Naive thymus-derived CD8-positive, alpha-beta T cell (primary cell): ENCODE measurements at regions of chr20 and their contacts with region 1.

Region 1: GRCh38 chr20:2651772-2652723 is at the start of gene NOP56:
- DNase-seq: peak; percentile 90 to 99 (median 95)
- ATAC-seq: peak; percentile 84 to 87
- H3K4me3 Mint-ChIP-seq: peak within 1 kb of the TSS; percentile 84 to 94 (median 89)
- H3K27ac Mint-ChIP-seq: peak within 1 kb of the TSS; percentile 81 to 95 (median 91)
- H3K4me1 Mint-ChIP-seq: peaks cover 7 to 45% (median 36%) of the 10 kb centered on the region in 4 donors
- H3K27me3 Mint-ChIP-seq: no peaks in the 10 kb centered on the region
- polyA plus RNA-seq, gene NOP56: 72.3 to 115 (median 107) TPM

Region 2: DNA sequence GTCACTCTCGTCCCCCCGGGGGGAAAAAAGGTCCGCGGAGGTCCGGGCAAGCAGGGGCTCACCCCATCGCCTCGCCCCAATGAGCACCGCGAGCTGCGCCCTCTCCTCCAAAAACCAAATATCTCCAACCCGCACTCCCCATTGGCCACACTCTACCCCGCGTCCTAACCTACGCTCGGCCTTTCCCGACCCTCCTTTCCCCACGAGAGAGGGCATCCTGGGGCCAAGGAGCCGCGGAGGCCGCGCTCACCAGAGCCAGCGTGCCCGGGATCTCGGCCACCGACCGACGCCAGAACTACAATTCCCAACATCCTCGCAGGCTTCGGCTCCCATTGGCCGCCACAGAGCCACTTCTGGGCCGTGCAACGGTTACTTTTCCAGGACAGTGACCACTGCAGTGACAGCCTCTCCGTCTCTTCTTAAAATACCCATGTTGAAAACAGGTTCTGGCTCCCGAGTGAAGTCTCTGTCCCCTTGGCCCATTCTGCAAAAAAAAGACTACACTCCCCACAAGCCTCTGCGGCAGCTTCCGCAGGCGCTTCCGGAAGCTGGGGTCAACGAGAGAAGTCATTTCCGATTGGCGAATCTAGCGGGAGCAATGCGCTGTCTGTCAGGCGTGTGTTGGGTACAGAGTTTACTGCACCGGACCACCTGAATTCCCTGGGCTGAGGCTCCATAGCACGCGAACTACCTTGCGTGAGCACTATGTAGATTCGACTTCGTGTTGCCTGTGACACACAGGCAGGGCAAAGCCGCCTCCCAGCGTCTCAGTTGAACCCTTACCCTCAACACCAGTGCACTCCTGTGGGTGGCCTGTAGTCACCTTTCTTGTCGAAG is 143.2 kb before region 1 on chr20 and contains the start of gene ZNF343:
- POLR2A ChIA-PET with region 1: interaction called, 11 read pairs
- DNase-seq: peak; percentile 59 to 91 (median 74)
- ATAC-seq: peak; percentile 93
- H3K4me3 Mint-ChIP-seq: peak within 1 kb of the TSS; percentile 95 to 100 (median 100)
- H3K27ac Mint-ChIP-seq: peak within 1 kb of the TSS; percentile 90 to 99 (median 97)
- H3K4me1 Mint-ChIP-seq: peaks cover 12 to 29% (median 20%) of the 10 kb centered on the region in 4 donors
- H3K27me3 Mint-ChIP-seq: peaks cover 0 to 21% (median 6%) of the 10 kb centered on the region in 5 donors
- polyA plus RNA-seq, gene ZNF343: 1.7 to 5.0 (median 3.2) TPM

Region 3: DNA sequence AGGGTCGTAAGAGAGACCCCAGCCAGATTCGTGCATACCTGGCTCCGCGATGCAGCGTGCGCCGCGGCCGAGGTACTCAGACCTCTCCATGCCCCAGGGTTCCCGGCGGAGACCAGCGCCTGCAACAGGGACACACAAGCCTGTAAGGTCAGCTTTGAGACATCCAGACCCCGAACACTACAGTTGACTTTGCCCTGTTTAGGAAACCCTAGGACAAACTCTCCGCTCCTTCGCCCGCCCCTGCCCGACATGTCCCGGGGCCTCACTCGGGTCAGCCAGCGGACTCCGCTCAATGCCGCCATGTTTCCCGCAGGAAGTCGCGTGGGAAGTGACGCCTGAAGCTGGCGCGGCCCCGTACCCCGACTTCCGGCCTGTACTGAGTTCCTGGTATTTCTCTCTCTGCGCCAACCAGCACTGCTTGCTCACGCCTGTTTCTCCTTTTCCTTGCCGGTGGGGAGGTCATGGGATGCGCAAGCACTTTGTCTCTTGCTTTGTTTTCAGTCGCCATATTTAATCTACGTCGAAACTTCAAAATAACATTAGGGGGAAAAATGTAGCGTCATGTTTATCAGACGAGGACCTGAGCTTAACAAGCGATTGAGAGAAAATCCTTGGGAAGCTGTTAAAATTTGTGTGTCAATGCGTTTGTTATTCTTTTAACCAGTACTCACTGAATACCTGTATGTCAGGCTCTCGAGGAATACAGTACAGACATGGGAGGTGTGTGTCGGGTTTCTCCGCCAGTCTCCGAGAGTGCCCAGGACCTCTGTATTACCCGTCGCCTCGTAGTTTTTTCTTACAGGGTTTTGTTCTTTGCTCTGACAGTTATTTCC is 12.1 kb after region 1 on chr20 and contains the start of gene IDH3B:
- POLR2A ChIA-PET with region 1: interaction called, 150 read pairs
- DNase-seq: peak; percentile 80 to 94 (median 91)
- ATAC-seq: peak; percentile 98 to 99
- H3K4me3 Mint-ChIP-seq: peak within 1 kb of the TSS; percentile 89 to 99 (median 92)
- H3K27ac Mint-ChIP-seq: peak within 1 kb of the TSS; percentile 92 to 100 (median 96)
- H3K4me1 Mint-ChIP-seq: peaks cover 12 to 37% (median 26%) of the 10 kb centered on the region in 4 donors
- H3K27me3 Mint-ChIP-seq: peaks cover 0 to 7% (median 0%) of the 10 kb centered on the region in 5 donors
- polyA plus RNA-seq, gene IDH3B: 95.6 to 126 (median 115) TPM

Region 4: GRCh38 chr20:2688041-2688591 is 36.1 kb after region 1 on chr20:
- POLR2A ChIA-PET with region 1: interaction called, 11 read pairs
- DNase-seq: peak; percentile 70 to 89 (median 78)
- ATAC-seq: peak; percentile 78 to 91
- H3K4me3 Mint-ChIP-seq: peak overlapping the region in 9 of 10 donors; percentile 43 to 71 (median 56)
- H3K27ac Mint-ChIP-seq: peak overlapping the region; percentile 9 to 82 (median 54)
- H3K4me1 Mint-ChIP-seq: peaks cover 21 to 33% (median 28%) of the 10 kb centered on the region in 4 donors
- H3K27me3 Mint-ChIP-seq: peaks cover 2 to 25% (median 5%) of the 10 kb centered on the region in 5 donors

Region 5: DNA sequence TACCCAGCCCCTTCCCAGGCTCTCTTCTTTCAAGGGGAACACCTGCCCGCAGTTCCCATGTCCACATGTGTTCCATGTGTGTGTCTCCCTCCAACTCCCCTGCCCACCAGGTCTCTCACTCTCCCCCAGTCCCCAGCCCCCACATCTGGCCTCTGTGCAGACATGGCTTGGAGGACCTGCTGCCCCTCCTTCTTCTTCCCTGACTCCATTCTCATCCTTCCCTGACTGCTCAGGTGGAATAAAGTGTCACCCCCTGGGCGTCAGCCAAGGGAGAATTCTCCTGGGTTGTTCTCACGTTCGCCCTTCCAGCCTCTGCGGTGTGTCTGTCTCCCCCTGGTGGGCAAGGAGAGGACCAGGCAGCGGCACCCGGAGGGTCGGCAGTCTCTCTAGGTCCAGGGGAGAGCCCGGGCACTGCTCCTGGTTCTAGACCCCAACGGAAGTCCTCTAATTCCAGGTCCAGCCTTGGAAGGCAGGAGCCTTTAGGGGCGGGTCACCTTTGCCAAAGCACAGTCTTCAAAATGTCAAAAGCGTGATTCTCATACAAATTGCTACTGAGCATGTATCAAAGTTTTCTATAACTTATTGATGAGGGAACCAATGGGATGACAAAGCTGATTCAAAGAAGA is 91.0 kb after region 1 on chr20:
- POLR2A ChIA-PET with region 1: interaction called, 29 read pairs
- DNase-seq: peak; percentile 58 to 88 (median 72)
- ATAC-seq: peak; percentile 43 to 72
- H3K4me3 Mint-ChIP-seq: peak overlapping the region; percentile 46 to 96 (median 77)
- H3K27ac Mint-ChIP-seq: peak overlapping the region; percentile 87 to 99 (median 96)
- H3K4me1 Mint-ChIP-seq: peaks cover 38 to 63% (median 50%) of the 10 kb centered on the region in 4 donors
- H3K27me3 Mint-ChIP-seq: peaks cover 0 to 1% (median 0%) of the 10 kb centered on the region in 5 donors